ENCODE measurements at regions of chr1 and their contacts with region 1.

Region 1: GRCh38 chr1:219385786-219386427 is 212.2 kb downstream of the LYPLAL1 start:
- DNase-seq: no peak
- H3K4me3 ChIP-seq: no peak overlapping the region
- CTCF ChIP-seq: peak; percentile 78

Region 2: GRCh38 chr1:219373616-219373935 is 12.3 kb before region 1 on chr1:
- CTCF ChIA-PET with region 1: interaction called, 19 read pairs
- POLR2A ChIA-PET with region 1: no interaction called
- DNase-seq: no peak
- H3K4me3 ChIP-seq: no peak overlapping the region
- CTCF ChIP-seq: no peak